Posterior vena cava (tissue), 2 donors: ENCODE measurements at regions of chr2 and their contacts with region 1.

Region 1: GRCh38 chr2:166627893-166628292 is 133.8 kb upstream of the SCN7A start:
- DNase-seq: no peak

Region 2: DNA sequence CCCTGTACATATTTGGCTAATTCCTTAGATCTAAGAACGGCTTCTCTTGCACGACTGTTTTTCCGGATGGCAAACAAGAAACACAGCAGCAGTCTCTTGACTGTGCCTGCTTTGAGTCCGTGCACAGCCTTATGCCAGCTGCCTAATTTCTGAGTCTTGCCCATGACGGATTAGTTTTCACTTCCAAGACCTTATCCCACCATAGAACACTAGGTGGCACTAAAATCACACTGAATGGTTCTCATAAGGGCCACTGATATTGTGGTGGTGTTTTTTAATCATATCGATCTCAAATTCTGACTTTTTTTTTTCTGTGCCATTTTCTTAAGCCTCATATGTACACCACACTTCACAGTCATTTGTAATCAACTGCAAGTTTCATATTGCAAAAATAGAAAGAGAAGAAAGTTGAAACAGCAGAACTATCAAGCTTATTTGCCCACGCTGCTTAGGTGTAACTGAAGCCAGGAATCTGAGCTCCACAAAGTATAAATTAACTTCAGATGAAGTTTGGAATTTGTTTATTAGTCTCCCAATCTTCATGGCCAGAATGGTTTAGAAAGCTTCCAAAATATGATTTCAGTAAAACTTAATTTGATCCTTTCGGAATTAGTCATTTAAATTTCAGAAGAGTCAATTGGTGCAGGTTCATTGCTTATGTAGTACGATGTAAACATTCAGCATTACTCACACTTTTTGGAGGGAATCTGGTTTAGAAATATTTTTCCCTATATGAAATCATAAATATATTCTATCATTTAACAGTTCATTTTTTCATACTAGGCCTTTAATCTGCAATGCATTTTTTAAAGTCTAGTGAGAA is 88.3 kb before region 1 on chr2:
- intact Hi-C with region 1: loop called in 1 of 2 experiments (anchors 5 kb)
- DNase-seq: no peak

Region 3: GRCh38 chr2:166560022-166560421 is 67.9 kb before region 1 on chr2:
- intact Hi-C with region 1: no loop called
- DNase-seq: no peak